Astrocyte of the cerebellum (primary cell): ENCODE measurements at regions of chrX and their contacts with region 1.

Region 1: GRCh38 chrX:41116948-41117347 is 31.7 kb downstream of the USP9X start:
- DNase-seq: no peak
- H3K4me3 ChIP-seq: no peak overlapping the region
- CTCF ChIP-seq: no peak

Region 2: DNA sequence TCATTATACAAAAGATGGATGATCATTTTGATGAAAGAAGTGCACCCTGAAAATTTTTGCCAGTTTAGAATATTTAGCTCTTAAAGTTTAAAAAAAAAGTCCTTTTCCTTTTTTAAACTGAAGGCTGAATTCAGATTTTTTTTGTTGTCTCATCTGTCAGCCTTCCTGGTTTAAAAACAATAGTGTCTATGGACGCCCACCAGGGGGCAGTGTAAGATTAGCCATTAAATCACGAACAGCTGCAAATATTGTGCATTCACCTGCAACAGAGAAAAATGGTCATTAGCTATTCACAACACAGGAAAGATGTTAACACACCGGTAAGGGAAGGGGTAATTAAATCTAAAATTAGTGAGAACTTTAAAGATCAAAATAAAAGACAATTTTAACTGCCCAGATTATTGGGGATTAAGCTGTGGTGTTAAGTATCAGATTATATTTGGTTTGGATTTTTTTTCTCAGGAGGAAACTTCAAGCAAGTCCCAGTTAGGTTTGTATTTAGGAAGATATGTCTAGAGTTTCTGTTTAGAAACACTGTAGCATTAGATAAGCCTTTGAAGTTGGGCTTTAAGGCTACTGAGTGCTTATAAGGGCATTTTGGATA is 465.2 kb before region 1 on chrX:
- in situ Hi-C with region 1: loop called (anchors 25 kb)
- DNase-seq: peak; percentile 54
- H3K4me3 ChIP-seq: no peak overlapping the region
- CTCF ChIP-seq: peak; percentile 63